ENCODE measurements at regions of chr20 and their contacts with region 1.

Region 1: GRCh38 chr20:49610701-49611538 is 43.0 kb upstream of the PTGIS start:
- DNase-seq: peak; percentile 73 to 97
- H3K4me3 ChIP-seq: peak overlapping the region; percentile 8 to 53 (median 46); a peak in 7 of 8 replicates
- H3K27ac ChIP-seq: no peak overlapping the region
- H3K4me1 ChIP-seq: peaks cover 0 to 5% (median 2%) of the 10 kb centered on the region in 4 experiments; a peak in 1 of 7 replicates
- H3K27me3 ChIP-seq: no peaks in the 10 kb centered on the region
- CTCF ChIP-seq: peak; percentile 86 to 99 (median 95)
- EP300 ChIP-seq: 0 out of 3 replicates have a peak, but pooled peaks of 1 of the 2 experiments have one; percentile 31
- POLR2A ChIP-seq: no peak
- RAD21 ChIP-seq: peak; percentile 95 to 98

Region 2: GRCh38 chr20:49549811-49550551 is 60.9 kb before region 1 on chr20:
- CTCF ChIA-PET with region 1: interaction called, 665 read pairs
- POLR2A ChIA-PET with region 1: no interaction called
- DNase-seq: peak in 1 of 2 experiments; percentile 28
- H3K4me3 ChIP-seq: no peak overlapping the region
- H3K27ac ChIP-seq: no peak overlapping the region
- H3K4me1 ChIP-seq: no peaks in the 10 kb centered on the region
- H3K27me3 ChIP-seq: no peaks in the 10 kb centered on the region
- CTCF ChIP-seq: no peak
- EP300 ChIP-seq: no peak
- POLR2A ChIP-seq: no peak
- RAD21 ChIP-seq: no peak

Region 3: DNA sequence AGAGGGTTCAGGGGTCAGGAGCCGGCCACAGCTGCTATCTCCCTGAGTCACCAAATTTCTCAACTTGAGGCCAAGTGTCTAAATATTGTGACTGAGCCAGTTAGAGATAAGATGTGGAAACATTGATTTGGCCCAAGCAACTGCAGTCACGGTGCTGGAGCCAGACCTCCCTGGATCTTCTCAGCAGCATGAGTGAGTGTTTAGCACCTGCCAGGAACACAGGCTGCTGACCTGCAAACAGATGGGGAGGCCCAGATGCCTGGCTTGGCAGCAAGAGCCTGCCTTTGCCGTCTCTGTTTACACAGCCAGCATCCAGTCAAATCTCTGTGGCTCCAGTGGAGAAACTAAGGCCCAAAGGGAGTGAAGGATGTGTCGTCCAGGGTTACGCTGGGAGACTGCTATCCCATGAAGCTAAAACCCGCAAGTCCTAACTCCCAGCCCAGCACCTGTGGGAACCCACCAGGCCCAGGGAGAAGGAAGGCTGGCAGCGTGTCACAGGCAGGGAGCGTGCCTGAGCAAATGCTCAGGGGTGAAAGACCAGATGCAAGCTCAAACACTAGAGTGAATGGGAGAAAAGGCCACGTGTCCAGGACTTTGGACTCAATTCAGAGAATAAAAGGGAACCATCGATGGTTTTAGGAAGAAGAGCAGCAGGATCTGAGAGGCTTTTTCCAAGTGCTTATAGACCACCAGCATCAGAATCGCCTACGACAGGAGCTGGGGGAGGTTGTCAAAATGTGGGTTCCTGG is 27.1 kb before region 1 on chr20:
- CTCF ChIA-PET with region 1: interaction called, 15 read pairs
- POLR2A ChIA-PET with region 1: no interaction called
- DNase-seq: no peak
- H3K4me3 ChIP-seq: no peak overlapping the region
- H3K27ac ChIP-seq: no peak overlapping the region
- H3K4me1 ChIP-seq: peaks cover 0 to 6% (median 3%) of the 10 kb centered on the region in 4 experiments; a peak in 5 of 7 replicates
- H3K27me3 ChIP-seq: no peaks in the 10 kb centered on the region
- CTCF ChIP-seq: no peak
- EP300 ChIP-seq: no peak
- POLR2A ChIP-seq: no peak
- RAD21 ChIP-seq: no peak

Region 4: GRCh38 chr20:49785852-49786175 is 174.9 kb after region 1 on chr20:
- CTCF ChIA-PET with region 1: interaction called, 12 read pairs
- POLR2A ChIA-PET with region 1: no interaction called
- DNase-seq: no peak
- H3K4me3 ChIP-seq: no peak overlapping the region
- H3K27ac ChIP-seq: no peak overlapping the region
- H3K4me1 ChIP-seq: no peaks in the 10 kb centered on the region; a peak in 1 of 7 replicates
- H3K27me3 ChIP-seq: no peaks in the 10 kb centered on the region
- CTCF ChIP-seq: no peak
- EP300 ChIP-seq: no peak
- POLR2A ChIP-seq: no peak
- RAD21 ChIP-seq: no peak

Region 5: GRCh38 chr20:49853640-49854039 is 242.7 kb after region 1 on chr20:
- CTCF ChIA-PET with region 1: interaction called, 54 read pairs
- POLR2A ChIA-PET with region 1: no interaction called
- DNase-seq: no peak
- H3K4me3 ChIP-seq: no peak overlapping the region
- H3K27ac ChIP-seq: no peak overlapping the region
- H3K4me1 ChIP-seq: peaks cover 3 to 13% (median 7%) of the 10 kb centered on the region in 4 experiments; a peak in 6 of 7 replicates
- H3K27me3 ChIP-seq: no peaks in the 10 kb centered on the region
- CTCF ChIP-seq: no peak
- EP300 ChIP-seq: no peak
- POLR2A ChIP-seq: no peak
- RAD21 ChIP-seq: no peak

Region 6: DNA sequence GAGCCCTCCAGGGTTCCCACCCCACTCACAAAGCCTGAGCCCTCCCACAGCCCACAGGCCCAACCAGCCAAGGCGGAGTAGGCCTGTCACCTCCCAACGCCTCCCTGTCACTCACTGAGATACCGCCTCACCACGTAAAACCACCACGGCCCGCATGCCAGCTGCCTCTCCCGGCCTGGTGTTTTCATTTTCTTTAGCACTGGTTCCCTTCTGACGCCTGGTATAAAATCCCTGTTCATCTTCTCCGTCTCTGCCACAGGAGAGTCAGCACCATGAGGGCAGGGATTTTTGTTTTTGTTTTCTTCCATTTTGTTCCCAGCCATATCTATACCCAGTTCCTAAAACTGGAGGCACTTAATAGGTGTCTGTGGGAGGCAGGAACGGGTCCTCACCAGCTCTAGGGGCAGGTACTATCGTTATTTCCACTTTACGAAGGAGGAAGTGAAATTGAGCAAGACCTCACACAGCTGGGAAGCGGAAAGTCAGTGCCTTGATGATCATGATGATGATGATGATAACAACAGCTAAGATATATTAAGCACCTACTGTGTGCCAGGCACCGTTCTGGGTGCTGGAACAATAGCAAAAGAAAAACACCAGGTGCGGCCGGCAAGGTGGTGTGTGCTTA is 430.4 kb after region 1 on chr20:
- CTCF ChIA-PET with region 1: no interaction called
- POLR2A ChIA-PET with region 1: no interaction called
- DNase-seq: no peak
- H3K4me3 ChIP-seq: no peak overlapping the region
- H3K27ac ChIP-seq: no peak overlapping the region
- H3K4me1 ChIP-seq: peaks cover 0 to 17% (median 5%) of the 10 kb centered on the region in 4 experiments; a peak in 4 of 7 replicates
- H3K27me3 ChIP-seq: no peaks in the 10 kb centered on the region
- CTCF ChIP-seq: no peak
- EP300 ChIP-seq: no peak
- POLR2A ChIP-seq: no peak
- RAD21 ChIP-seq: no peak